Activated B cell treated with CpG ODN at 0.5 μM for 24 hours (primary cell): ENCODE measurements at regions of chr3 and their contacts with region 1.

Region 1: DNA sequence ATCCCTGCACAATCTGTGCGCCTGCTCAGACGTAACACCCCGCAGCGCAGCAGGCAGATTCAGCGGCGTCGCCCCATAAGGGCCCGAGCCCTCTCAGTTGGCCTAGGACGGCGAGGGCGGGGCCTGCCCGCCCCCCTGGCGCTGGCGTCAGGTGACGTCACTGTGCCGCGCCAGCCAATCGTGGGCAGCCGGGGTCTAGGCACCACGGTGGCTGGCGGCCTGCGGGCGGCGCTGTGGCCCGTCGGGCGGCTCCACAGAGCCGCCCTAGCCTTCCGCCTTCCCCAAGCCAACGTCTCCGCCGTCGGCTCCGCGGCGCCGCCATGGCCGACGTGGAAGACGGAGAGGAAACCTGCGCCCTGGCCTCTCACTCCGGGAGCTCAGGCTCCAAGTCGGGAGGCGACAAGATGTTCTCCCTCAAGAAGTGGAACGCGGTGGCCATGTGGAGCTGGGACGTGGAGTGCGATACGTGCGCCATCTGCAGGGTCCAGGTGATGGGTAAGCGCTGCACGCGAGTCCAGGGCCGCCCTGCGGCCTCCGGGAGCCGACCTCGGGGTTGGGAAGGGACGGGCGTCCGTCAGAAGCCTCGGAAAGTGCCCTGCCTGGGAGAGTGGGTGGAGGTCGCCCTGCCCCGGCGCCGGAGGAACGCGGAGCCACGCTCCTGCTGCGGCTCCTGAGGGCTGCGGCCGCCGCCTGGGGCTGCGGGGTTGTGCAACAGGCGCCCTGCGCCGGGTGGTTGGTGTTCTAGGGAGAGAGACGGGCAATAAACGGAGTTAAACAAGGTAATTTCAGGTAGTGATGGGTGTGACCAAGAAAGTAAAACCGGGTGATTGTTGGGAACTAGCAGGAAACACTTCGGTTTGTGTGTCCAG is at the start of gene RNF7:
- DNase-seq: peak; percentile 98
- ATAC-seq: peak; percentile 93
- H3K4me3 Mint-ChIP-seq: peak within 1 kb of the TSS; percentile 96
- H3K27ac Mint-ChIP-seq: peak within 1 kb of the TSS; percentile 96
- H3K4me1 Mint-ChIP-seq: peaks cover 40% of the 10 kb centered on the region
- H3K27me3 Mint-ChIP-seq: no peaks in the 10 kb centered on the region
- CTCF ChIP-seq: no peak
- total RNA-seq, gene RNF7: 60.7 and 62.1 TPM in 2 replicates

Region 2: DNA sequence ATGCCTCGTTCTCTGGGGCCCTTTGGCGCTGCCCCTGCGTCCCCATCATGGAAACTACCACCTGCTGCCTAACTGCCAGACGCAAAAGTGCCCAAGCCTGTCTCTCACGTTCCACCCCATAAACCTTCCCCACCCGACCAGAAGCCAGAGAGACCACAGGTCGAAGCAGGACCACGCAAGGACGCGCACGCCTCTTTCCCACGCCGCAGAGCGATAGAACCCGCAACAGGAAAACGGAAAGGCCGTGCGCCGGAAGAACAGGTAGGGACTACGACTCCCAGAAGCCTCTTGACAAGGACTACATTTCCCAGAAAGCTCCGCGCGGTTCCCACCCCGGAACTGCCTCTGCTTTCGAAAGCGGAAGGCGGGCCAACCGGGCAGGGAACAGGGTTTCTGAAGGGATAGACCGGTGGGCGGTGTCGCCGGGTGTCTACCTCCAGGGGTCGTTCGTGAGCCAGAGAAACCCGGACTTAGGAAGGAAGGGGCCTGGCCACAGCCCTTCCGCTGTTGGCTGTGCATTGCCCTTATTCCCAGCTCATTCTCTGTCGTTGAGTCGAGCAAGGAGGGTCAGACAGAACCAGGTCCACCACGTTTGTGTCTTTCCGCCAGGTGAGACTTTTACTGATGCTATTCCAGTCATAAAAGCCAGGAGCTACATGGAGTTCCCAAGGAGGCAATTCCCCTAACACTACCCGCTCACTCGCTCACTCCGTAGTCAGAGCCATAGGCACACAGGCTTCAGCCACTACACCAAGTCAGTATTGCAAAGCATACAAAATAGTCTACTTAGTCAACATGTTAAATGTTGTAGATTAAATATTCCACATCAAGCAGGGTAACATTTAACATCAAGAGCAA is 426.5 kb before region 1 on chr3:
- CTCF ChIA-PET with region 1: no interaction called
- POLR2A ChIA-PET with region 1: no interaction called
- intact Hi-C with region 1: loop called (anchors 1 kb)
- DNase-seq: peak; percentile 92
- ATAC-seq: peak; percentile 97
- H3K4me3 Mint-ChIP-seq: peak overlapping the region; percentile 100
- H3K27ac Mint-ChIP-seq: peak overlapping the region; percentile 98
- H3K4me1 Mint-ChIP-seq: peaks cover 19% of the 10 kb centered on the region
- H3K27me3 Mint-ChIP-seq: no peaks in the 10 kb centered on the region
- CTCF ChIP-seq: no peak

Region 3: GRCh38 chr3:141575879-141576743 is 162.1 kb before region 1 on chr3:
- CTCF ChIA-PET with region 1: no interaction called
- POLR2A ChIA-PET with region 1: no interaction called
- intact Hi-C with region 1: loop called (anchors 1 kb)
- DNase-seq: no peak
- ATAC-seq: peak; percentile 47
- H3K4me3 Mint-ChIP-seq: no peak overlapping the region
- H3K27ac Mint-ChIP-seq: peak overlapping the region; percentile 19
- H3K4me1 Mint-ChIP-seq: peaks cover 5% of the 10 kb centered on the region
- H3K27me3 Mint-ChIP-seq: no peaks in the 10 kb centered on the region
- CTCF ChIP-seq: no peak

Region 4: GRCh38 chr3:141913150-141913811 is 175.0 kb after region 1 on chr3:
- CTCF ChIA-PET with region 1: interaction called, 10 read pairs
- POLR2A ChIA-PET with region 1: interaction called, 3 read pairs
- intact Hi-C with region 1: loop called (anchors 1 kb)
- DNase-seq: no peak
- ATAC-seq: peak; percentile 58
- H3K4me3 Mint-ChIP-seq: no peak overlapping the region
- H3K27ac Mint-ChIP-seq: no peak overlapping the region
- H3K4me1 Mint-ChIP-seq: no peaks in the 10 kb centered on the region
- H3K27me3 Mint-ChIP-seq: no peaks in the 10 kb centered on the region
- CTCF ChIP-seq: peak; percentile 48

Region 5: GRCh38 chr3:142148792-142149672 is 410.8 kb after region 1 on chr3 and contains the start of gene TFDP2:
- CTCF ChIA-PET with region 1: no interaction called
- POLR2A ChIA-PET with region 1: no interaction called
- intact Hi-C with region 1: loop called (anchors 5 kb)
- DNase-seq: peak; percentile 78
- ATAC-seq: peak; percentile 99
- H3K4me3 Mint-ChIP-seq: peak within 1 kb of the TSS; percentile 86
- H3K27ac Mint-ChIP-seq: peak within 1 kb of the TSS; percentile 72
- H3K4me1 Mint-ChIP-seq: peaks cover 14% of the 10 kb centered on the region
- H3K27me3 Mint-ChIP-seq: no peaks in the 10 kb centered on the region
- CTCF ChIP-seq: no peak
- total RNA-seq, gene TFDP2: 20.0 and 23.1 TPM in 2 replicates

Region 6: DNA sequence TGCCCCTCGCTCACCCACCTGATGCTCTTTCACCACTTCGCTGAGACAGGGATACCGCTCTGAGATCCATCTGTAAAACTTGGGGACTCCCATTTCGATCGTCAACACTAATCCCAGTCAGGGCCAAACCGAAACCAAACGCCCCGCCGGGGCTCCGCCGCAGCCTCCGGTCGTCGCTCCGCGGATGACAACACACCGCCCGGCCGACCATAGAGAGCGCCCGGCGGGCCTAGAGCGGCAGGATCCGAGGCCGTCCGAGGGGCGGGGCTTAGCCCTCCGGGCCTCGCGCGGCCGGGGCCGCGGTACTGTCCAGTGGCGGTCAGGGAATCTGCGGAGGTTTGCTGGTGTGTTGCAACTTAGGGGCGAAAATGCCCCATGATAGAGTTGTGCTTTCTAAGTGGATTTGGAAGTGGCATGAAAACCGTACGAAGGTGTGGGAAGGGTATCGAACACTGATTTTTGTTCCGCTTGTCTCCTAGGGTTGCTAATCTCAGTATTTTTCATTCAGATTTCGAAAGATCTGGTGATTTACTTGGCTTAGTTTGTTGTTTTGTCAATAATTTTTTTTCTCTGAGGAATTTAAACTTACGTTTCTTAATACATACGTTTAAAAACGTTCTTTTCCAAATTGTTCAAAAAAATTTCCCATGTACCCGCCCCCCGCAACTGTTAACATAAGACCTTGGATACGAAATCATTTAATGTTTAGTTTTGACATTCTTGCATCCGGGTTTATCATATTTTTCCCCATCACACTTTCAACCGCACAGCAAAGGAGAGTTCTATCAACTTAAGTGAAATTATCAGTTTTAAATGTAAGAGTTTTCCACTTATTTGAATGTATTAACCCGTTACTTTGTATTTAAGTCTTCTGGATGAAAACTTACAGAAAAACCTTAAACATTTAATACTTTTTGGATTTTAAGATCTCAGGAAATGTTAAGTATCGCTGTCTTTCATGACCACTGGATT is 709.9 kb after region 1 on chr3 and contains the start of gene XRN1:
- CTCF ChIA-PET with region 1: no interaction called
- POLR2A ChIA-PET with region 1: interaction called, 9 read pairs
- intact Hi-C with region 1: loop called (anchors 1 kb)
- DNase-seq: peak; percentile 96
- ATAC-seq: peak; percentile 97
- H3K4me3 Mint-ChIP-seq: peak within 1 kb of the TSS; percentile 97
- H3K27ac Mint-ChIP-seq: peak within 1 kb of the TSS; percentile 98
- H3K4me1 Mint-ChIP-seq: peaks cover 44% of the 10 kb centered on the region
- H3K27me3 Mint-ChIP-seq: no peaks in the 10 kb centered on the region
- CTCF ChIP-seq: no peak
- total RNA-seq, gene XRN1: 55.0 and 63.0 TPM in 2 replicates

Region 7: DNA sequence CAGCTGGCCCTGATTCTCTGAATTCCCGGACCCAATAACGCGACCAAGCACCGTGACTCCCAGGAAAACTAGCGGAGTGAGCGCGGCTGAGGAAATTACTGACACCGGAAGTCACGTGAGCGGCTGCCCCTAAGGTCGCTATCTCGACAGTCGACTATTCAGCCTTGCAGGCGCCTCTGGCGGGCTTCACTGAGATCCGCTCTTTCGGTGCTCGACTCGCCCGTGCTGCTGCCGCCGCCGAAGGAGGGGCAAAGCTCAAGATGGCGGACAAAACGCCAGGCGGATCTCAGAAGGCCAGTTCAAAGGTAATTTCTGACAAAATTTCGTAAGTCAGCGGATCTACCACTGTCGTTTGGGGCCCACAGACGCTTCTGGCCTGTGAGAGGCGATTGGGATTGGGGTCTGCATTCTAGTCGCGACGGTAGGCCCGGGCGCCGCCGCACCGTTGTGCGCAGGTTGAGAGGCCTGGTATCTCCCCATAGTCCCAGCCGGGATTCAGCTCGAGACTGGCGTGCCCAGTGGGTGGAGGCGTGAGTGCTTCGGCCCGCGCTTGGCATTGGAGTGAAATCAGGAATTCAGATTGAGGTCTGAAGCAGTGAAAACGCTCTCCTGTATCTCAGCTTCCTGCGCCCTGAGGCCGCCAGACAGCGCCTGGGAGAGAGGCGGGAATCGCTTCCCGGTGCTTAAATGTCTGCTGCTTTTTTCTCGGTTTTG is 1263.3 kb after region 1 on chr3 and contains the start of gene U2SURP:
- CTCF ChIA-PET with region 1: no interaction called
- POLR2A ChIA-PET with region 1: interaction called, 5 read pairs
- intact Hi-C with region 1: loop called (anchors 2 kb)
- DNase-seq: peak; percentile 74
- ATAC-seq: peak; percentile 93
- H3K4me3 Mint-ChIP-seq: peak within 1 kb of the TSS; percentile 99
- H3K27ac Mint-ChIP-seq: peak within 1 kb of the TSS; percentile 98
- H3K4me1 Mint-ChIP-seq: peaks cover 41% of the 10 kb centered on the region
- H3K27me3 Mint-ChIP-seq: no peaks in the 10 kb centered on the region
- CTCF ChIP-seq: no peak
- total RNA-seq, gene U2SURP: 117 and 131 TPM in 2 replicates